ENCODE measurements at regions of chr6 and their contacts with region 1.

Region 1: DNA sequence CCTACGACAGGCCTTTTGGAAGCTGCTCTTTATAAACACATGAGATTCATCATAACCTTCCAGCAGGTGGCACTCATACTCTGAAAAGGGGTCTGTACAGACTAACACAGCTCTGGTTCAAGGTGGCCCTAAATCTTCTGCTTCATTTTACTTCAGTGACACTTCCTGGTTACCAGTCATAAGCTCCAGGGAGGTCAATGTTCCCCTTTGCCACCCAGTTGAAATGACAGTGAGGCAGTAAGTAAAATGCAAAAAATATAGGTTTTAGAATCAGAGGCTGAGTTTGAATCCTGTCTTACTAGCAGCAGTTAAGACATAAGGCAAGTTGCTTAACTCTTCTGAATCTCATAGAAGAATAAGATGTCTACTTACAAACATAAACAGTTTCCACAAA is 132.8 kb downstream of the CDK19 start:
- DNase-seq: peak; percentile 63
- CTCF ChIP-seq: peak; percentile 59

Region 2: GRCh38 chr6:110609101-110609500 is 73.4 kb before region 1 on chr6:
- in situ Hi-C with region 1: no loop called
- DNase-seq: no peak
- CTCF ChIP-seq: no peak

Region 3: GRCh38 chr6:110873981-110874879 is 191.8 kb after region 1 on chr6 and contains the start of gene AMD1:
- in situ Hi-C with region 1: loop called (anchors 10 kb)
- DNase-seq: peak; percentile 98
- CTCF ChIP-seq: no peak